Activated naive CD4-positive, alpha-beta T cell treated with anti-CD3 and anti-CD28 coated beads, Interleukin-2, amount 10 ng/mL, durations not matched to agents 7 days and 5 days (primary cell): ENCODE measurements at regions of chr14 and their contacts with region 1.

Region 1: GRCh38 chr14:66746316-66747006 is 238.5 kb downstream of the GPHN start:
- DNase-seq: peak; percentile 22
- H3K4me3 Mint-ChIP-seq: no peak overlapping the region
- H3K27ac Mint-ChIP-seq: no peak overlapping the region
- H3K4me1 Mint-ChIP-seq: no peaks in the 10 kb centered on the region
- H3K27me3 Mint-ChIP-seq: no peaks in the 10 kb centered on the region

Region 2: GRCh38 chr14:66624299-66624937 is 122.0 kb before region 1 on chr14:
- CTCF ChIA-PET with region 1: interaction called, 12 read pairs
- DNase-seq: peak; percentile 56
- H3K4me3 Mint-ChIP-seq: no peak overlapping the region
- H3K27ac Mint-ChIP-seq: no peak overlapping the region
- H3K4me1 Mint-ChIP-seq: no peaks in the 10 kb centered on the region
- H3K27me3 Mint-ChIP-seq: no peaks in the 10 kb centered on the region

Region 3: DNA sequence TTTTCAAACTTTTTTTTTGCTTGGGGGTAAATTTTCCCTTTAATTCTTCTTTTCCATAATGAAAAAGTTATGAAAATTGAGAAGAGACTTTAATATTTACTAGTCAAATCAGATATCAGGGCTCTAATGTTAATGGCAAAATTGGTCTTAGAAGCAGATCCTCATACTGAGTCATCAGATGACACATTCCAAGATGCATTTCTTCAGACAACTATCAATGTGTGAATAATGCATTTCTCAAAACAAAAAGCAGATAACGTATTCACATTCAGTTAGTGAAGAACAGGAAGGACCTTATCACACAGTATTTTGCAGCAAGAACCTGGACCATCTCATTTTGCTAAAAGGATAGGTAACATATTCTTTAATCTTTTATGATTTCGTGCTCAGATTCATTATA is 107.8 kb before region 1 on chr14:
- CTCF ChIA-PET with region 1: no interaction called
- DNase-seq: no peak
- H3K4me3 Mint-ChIP-seq: no peak overlapping the region
- H3K27ac Mint-ChIP-seq: no peak overlapping the region
- H3K4me1 Mint-ChIP-seq: no peaks in the 10 kb centered on the region
- H3K27me3 Mint-ChIP-seq: no peaks in the 10 kb centered on the region